Left colon (tissue), 2 donors: ENCODE measurements at regions of chr16 and their contacts with region 1.

Region 1: DNA sequence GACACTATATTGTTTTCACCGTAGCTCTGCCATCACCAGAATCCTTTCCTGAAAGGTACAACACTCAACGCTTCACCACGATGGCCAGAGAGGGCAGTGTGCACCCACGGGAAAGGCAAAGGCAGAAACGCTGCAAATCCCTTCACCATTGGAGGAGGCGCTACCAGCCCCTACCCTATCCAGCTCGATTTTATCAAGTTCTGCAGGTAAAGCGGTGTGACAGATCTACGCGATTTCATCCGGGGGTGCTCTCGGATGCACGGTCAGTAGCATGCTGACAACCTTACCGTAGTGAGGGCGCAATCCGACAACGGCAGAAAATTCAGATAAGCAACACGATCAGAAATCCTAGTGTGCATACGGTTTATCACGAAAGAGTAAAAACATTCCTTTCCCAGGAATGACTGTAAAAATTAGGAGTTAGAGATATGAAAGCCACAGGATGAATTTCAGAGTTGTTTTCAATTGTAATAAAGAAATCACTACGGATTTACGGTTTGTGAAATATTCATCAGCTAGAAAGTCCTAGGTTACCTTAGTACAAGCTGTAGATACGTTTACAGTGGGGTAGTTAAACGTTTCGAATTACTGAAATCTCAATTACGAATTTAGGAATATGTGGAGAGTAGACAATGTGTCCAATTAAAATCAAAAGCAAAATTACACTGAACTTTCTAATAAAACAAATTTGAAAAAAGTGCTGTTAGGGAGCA is 1.8 kb downstream of the NETO2 start:
- DNase-seq: peak; percentile 82 to 85
- ATAC-seq: peak; percentile 74

Region 2: DNA sequence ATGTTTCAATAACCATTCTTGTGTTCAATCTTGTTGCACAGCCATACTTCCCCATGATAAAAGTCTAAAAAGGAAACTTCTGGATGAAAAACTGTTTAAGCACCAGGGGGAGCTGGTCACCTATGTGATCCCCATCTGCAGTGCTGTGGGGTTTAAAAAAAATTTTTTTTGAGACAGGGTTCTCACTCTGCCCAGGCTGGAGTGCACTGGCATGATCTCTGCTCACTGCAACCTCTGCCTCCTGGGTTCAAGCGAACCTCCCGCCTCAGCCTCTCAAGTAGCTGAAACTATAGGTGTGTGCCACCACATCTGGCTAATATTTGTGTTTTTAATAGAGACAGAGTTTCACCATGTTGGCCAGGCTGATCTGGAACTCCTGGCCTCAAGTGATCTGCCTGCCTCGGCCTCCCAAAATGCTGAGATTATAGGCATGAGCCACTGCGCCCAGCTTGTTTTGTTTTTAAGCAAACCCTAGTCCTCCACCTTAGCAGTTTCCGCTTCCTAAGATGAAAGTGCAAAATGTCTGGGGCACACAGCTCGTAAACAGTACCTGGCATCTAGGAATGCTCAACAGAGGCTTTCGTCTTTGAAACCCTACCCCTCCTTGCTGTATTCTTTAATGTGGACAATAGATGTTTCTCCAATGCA is 193.9 kb before region 1 on chr16:
- intact Hi-C with region 1: no loop called
- DNase-seq: no peak
- ATAC-seq: peak; percentile 69

Region 3: GRCh38 chr16:47278306-47278970 is 136.5 kb after region 1 on chr16:
- intact Hi-C with region 1: no loop called
- DNase-seq: no peak
- ATAC-seq: no peak

Region 4: DNA sequence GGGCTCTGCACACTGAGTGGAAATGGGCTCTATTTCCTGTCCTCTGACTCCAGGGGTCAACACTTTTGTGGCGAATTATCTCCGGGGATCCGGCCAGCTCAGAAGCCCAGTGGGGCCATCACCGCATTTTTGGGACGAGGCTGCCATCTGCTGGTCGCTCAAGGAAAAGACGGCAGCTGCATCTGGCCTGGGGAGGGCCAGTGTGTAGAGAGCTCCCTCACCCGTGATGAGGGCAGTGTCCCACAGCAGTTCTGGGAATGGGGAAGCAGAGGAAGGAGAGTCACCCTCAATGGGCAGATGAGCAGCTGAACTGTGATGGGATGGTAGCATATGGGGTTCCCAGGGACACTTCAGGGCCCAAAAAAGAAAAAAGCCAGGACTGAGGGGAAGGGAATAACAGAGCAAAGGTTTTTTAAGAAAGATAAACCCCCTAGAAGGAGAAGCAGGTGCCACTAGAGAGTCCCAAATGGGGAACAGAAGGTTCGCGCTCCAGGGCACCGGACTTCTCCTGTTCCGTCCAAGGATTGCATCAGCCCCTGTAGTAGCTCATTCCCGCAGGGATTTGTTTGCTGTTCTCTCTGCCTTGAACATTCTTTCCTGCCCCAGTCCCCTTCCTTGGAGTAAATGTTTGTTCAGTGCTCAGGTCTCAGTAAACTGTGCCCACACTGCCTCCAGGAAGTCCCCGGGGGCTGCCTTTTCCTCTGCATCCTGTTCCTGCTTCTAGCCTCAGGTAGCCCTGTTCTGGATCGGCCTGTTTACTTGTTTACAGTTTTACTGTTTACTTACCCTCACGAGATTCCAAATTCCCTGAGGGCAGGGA is 1023.2 kb after region 1 on chr16:
- intact Hi-C with region 1: loop called in 1 of 2 experiments (anchors 10 kb)
- DNase-seq: peak; percentile 48 to 71
- ATAC-seq: peak; percentile 97